OCI-LY7 (cell line): ENCODE measurements at regions of chr15 and their contacts with region 1.

Region 1: GRCh38 chr15:49721621-49722020 is 100.8 kb downstream of the DTWD1 start:
- DNase-seq: no peak
- H3K4me3 ChIP-seq: no peak overlapping the region
- H3K27ac ChIP-seq: no peak overlapping the region
- H3K4me1 ChIP-seq: no peaks in the 10 kb centered on the region
- CTCF ChIP-seq: no peak

Region 2: DNA sequence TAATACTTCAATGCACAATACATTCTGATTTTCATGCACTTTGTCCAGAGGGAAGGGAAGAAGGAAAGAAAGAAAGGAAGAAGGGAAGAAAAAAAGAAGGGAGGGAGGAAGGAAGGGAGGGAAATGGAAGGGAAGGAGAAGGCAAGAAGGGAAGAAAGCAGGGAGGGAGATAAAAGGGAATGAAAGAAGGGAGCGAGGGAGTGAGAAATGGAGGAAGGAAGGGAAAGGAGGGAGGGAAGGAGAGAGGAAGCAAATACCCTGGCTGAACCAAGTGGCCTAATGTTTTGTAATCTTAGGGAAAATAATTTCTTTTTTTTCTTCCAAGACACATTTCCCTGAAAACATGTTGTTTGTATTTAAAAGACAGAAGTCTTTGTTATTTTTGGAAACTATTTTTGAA is 64.9 kb before region 1 on chr15:
- CTCF ChIA-PET with region 1: no interaction called
- POLR2A ChIA-PET with region 1: no interaction called
- intact Hi-C with region 1: no loop called
- DNase-seq: no peak
- H3K4me3 ChIP-seq: no peak overlapping the region
- H3K27ac ChIP-seq: no peak overlapping the region
- H3K4me1 ChIP-seq: no peaks in the 10 kb centered on the region
- CTCF ChIP-seq: no peak

Region 3: GRCh38 chr15:49706805-49707204 is 14.8 kb before region 1 on chr15:
- CTCF ChIA-PET with region 1: no interaction called
- POLR2A ChIA-PET with region 1: interaction called, 4 read pairs
- intact Hi-C with region 1: loop called (anchors 1 kb)
- DNase-seq: no peak
- H3K4me3 ChIP-seq: no peak overlapping the region
- H3K27ac ChIP-seq: no peak overlapping the region
- H3K4me1 ChIP-seq: no peaks in the 10 kb centered on the region
- CTCF ChIP-seq: no peak

Region 4: GRCh38 chr15:49815950-49816349 is 94.3 kb after region 1 on chr15:
- CTCF ChIA-PET with region 1: no interaction called
- POLR2A ChIA-PET with region 1: no interaction called
- intact Hi-C with region 1: no loop called
- DNase-seq: no peak
- H3K4me3 ChIP-seq: no peak overlapping the region
- H3K27ac ChIP-seq: no peak overlapping the region
- H3K4me1 ChIP-seq: no peaks in the 10 kb centered on the region
- CTCF ChIP-seq: no peak